Common myeloid progenitor, CD34-positive (primary cell): ENCODE measurements at regions of chr17 and their contacts with region 1.

Region 1: GRCh38 chr17:16456742-16457316 is 35.2 kb downstream of the LRRC75A start:
- DNase-seq: peak in 2 of 3 donors; percentile 15 to 27
- H3K4me3 ChIP-seq: no peak overlapping the region
- H3K27ac ChIP-seq: no peak overlapping the region
- H3K4me1 ChIP-seq: no peaks in the 10 kb centered on the region
- H3K27me3 ChIP-seq: no peaks in the 10 kb centered on the region

Region 2: GRCh38 chr17:16438557-16439302 is 18.1 kb before region 1 on chr17:
- CTCF ChIA-PET with region 1: interaction called, 51 read pairs
- POLR2A ChIA-PET with region 1: no interaction called
- DNase-seq: peak; percentile 99 to 100 (median 100)
- H3K4me3 ChIP-seq: peak overlapping the region; percentile 60 to 98 (median 90)
- H3K27ac ChIP-seq: peak overlapping the region; percentile 74 to 90
- H3K4me1 ChIP-seq: peaks cover 9 to 59% (median 46%) of the 10 kb centered on the region in 4 experiments
- H3K27me3 ChIP-seq: no peaks in the 10 kb centered on the region

Region 3: DNA sequence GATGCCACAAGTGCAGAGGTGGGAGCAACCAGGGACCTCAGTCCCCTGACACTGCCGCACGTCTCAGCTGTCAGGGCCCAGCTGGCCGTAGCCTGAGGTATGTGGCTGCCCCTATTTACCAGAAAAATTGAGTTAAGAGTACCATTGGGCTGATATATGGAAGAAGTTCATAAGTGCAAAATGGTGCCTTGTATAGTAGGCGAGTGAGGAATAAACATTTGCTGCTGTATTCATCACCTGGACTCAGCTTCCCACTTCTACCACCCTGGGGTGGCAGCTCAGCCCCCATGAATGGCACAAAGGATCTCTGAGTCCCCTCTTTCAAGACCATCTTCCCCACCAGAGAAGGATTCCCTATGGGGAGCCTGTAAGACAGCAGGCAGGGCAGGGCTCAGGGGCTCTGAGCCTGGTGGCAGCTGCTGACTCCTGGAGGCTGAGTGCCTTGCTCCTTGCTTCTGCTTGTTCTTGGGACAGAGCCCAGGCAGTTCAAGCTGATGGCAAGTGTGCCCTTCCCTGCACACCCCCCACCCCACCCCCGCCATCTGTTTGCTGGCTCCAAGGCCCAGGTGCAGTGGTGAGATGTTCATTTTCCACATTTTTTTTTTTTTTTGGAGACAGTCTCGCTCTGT is 12.5 kb before region 1 on chr17:
- CTCF ChIA-PET with region 1: interaction called, 51 read pairs
- POLR2A ChIA-PET with region 1: no interaction called
- DNase-seq: no peak
- H3K4me3 ChIP-seq: no peak overlapping the region
- H3K27ac ChIP-seq: peak overlapping the region in 1 of 2 experiments; percentile 46
- H3K4me1 ChIP-seq: peaks cover 9 to 45% (median 29%) of the 10 kb centered on the region in 4 experiments
- H3K27me3 ChIP-seq: no peaks in the 10 kb centered on the region

Region 4: GRCh38 chr17:16470265-16470664 is 13.4 kb after region 1 on chr17:
- CTCF ChIA-PET with region 1: interaction called, 19 read pairs
- POLR2A ChIA-PET with region 1: interaction called, 3 read pairs
- DNase-seq: peak in 2 of 3 donors; percentile 24 to 28
- H3K4me3 ChIP-seq: peak overlapping the region in 1 of 7 experiments; percentile 31
- H3K27ac ChIP-seq: no peak overlapping the region
- H3K4me1 ChIP-seq: peaks cover 0 to 4% (median 0%) of the 10 kb centered on the region in 4 experiments
- H3K27me3 ChIP-seq: no peaks in the 10 kb centered on the region

Region 5: GRCh38 chr17:16491131-16491702 is 34.4 kb after region 1 on chr17:
- CTCF ChIA-PET with region 1: interaction called, 18 read pairs
- POLR2A ChIA-PET with region 1: no interaction called
- DNase-seq: peak in 2 of 3 donors; percentile 32 to 41
- H3K4me3 ChIP-seq: peak overlapping the region in 6 of 7 experiments; percentile 25 to 75 (median 58)
- H3K27ac ChIP-seq: no peak overlapping the region
- H3K4me1 ChIP-seq: peaks cover 0 to 18% (median 13%) of the 10 kb centered on the region in 4 experiments
- H3K27me3 ChIP-seq: peaks cover 0 to 34% (median 3%) of the 10 kb centered on the region in 5 experiments

Region 6: DNA sequence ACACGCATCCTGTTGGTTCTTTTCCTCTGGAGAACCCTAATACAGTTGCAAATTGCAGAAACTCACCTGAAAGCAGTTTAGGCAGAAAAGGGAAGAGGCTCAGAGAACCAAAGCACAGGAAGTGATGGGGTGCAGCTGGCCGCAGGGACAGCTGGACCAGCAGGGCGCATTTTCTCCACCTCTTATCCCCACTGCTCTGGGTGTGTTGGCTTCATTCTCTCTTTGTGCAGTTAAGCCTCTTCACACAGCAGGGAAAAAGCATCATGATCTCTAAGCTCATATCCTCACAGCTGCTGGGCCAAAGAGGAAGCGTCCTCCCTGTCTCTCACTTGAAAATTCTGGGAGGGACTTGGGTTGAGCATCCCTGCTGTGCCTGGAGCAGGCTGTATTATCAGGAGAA is 55.2 kb after region 1 on chr17:
- CTCF ChIA-PET with region 1: interaction called, 150 read pairs
- POLR2A ChIA-PET with region 1: no interaction called
- DNase-seq: peak in 2 of 3 donors; percentile 69 to 75
- H3K4me3 ChIP-seq: peak overlapping the region in 1 of 7 experiments; percentile 24
- H3K27ac ChIP-seq: no peak overlapping the region
- H3K4me1 ChIP-seq: peaks cover 0 to 18% (median 12%) of the 10 kb centered on the region in 4 experiments
- H3K27me3 ChIP-seq: peaks cover 0 to 3% (median 0%) of the 10 kb centered on the region in 5 experiments

Region 7: GRCh38 chr17:16521070-16521727 is 64.4 kb after region 1 on chr17:
- CTCF ChIA-PET with region 1: interaction called, 150 read pairs
- POLR2A ChIA-PET with region 1: no interaction called
- DNase-seq: peak; percentile 88 to 95 (median 92)
- H3K4me3 ChIP-seq: peak overlapping the region in 1 of 7 experiments; percentile 6
- H3K27ac ChIP-seq: no peak overlapping the region
- H3K4me1 ChIP-seq: peaks cover 0 to 4% (median 3%) of the 10 kb centered on the region in 4 experiments
- H3K27me3 ChIP-seq: peaks cover 0 to 12% (median 0%) of the 10 kb centered on the region in 5 experiments